ENCODE measurements at regions of chr17 and their contacts with region 1.

Region 1: DNA sequence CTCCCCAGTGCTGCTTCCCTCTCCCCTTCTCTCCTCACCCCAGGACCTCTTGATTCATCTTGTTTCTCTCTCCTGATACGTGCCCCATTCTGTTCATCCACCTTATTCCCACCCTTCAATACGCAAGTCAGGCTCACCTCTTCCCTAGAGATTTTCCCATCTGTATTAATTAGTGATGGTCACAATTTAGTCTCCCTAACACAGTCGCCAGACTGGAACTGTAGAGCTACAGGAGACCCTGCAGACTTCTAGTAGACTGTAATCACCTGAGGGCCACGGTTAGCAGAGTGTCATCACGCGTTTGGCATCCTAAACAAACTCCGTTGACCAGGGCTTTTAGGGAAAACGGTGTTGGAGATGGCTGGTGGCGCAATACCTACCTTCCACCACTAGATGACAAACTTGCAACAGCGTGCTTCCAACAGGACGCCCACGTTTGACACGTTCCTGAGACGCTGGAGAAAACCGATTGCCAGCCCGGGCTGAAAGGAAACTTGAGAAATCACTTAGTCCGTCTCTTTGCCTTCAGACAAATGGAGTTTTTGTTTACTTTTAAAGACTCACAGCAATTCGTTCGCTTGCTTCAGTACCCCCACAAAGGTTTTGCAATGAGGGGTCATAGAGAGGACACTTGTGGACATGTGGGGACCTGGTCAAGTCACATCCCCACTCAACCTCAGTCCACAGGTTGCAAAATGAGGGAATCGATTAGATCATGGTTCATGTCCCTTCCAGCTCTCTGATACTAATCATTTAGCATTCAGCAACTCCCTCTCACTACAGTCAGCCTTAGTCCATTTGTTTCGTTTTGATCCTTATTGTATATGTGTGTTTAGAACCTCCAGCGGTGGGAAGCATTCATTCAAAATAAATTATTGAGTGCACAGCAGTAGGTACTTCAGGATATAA is 20.6 kb downstream of the MYL4 start:
- DNase-seq: peak; percentile 86 to 92 (median 87)
- ATAC-seq: peak; percentile 47 to 60
- H3K4me3 ChIP-seq: no peak overlapping the region
- H3K27ac ChIP-seq: peak overlapping the region; percentile 52
- H3K4me1 ChIP-seq: peaks cover 6% of the 10 kb centered on the region
- H3K27me3 ChIP-seq: no peaks in the 10 kb centered on the region

Region 2: DNA sequence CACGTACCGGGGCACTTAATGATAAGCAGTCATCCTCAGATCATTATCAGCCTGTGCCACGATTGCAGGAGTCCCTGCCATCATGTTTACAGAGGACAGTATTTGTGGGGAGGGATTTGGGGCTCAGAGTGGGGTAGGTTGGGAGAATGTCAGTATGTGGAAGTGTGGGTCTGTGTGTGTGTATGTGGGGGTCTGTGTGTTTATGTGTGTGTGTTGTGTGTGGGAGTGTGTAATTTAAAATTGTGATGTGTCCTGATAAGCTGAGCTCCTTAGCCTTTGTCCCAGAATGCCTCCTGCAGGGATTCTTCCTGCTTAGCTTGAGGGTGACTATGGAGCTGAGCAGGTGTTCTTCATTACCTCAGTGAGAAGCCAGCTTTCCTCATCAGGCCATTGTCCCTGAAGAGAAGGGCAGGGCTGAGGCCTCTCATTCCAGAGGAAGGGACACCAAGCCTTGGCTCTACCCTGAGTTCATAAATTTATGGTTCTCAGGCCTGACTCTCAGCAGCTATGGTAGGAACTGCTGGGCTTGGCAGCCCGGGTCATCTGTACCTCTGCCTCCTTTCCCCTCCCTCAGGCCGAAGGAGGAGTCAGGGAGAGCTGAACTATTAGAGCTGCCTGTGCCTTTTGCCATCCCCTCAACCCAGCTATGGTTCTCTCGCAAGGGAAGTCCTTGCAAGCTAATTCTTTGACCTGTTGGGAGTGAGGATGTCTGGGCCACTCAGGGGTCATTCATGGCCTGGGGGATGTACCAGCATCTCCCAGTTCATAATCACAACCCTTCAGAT is 80.6 kb after region 1 on chr17:
- intact Hi-C with region 1: loop called (anchors 5 kb)
- DNase-seq: no peak
- ATAC-seq: no peak
- H3K4me3 ChIP-seq: no peak overlapping the region
- H3K27ac ChIP-seq: no peak overlapping the region
- H3K4me1 ChIP-seq: peaks cover 1% of the 10 kb centered on the region
- H3K27me3 ChIP-seq: no peaks in the 10 kb centered on the region

Region 3: DNA sequence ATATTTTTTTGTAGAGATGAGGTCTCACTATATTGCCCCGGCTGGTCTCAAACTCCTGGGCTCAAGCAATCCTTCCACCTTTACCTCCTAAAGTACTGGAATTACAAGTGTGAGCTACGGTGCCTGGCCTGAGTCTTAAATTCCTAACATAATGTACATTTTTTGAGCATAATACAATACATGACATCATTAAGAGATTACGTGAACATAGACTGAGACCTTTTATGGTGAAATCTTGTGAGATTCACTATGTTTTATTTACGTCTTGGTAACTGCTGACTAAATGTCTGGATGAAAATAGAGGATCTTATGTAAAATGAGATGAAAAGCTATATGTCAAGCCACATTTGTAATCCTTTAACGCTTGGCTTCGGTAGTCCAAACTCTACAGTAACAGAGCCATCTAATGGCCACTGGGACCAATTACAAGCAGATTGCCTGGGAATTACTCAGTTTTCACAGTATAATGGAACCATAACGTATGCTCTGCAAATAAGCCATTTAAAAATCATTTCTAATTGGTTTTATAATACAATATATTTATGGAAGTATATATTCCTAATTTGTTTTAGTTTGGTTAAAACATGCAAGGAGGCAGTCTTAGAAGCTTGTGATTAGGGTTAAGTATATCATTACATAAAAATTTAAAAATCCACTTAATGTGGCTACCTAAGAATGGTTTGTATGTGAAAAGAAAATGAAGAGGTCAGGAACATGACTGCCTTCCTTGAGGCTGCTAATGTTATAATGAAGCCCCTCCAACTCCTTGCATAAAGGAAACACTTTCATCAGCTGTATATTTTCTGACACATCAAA is 85.9 kb after region 1 on chr17:
- intact Hi-C with region 1: loop called (anchors 5 kb)
- DNase-seq: no peak
- ATAC-seq: peak; percentile 75 to 78
- H3K4me3 ChIP-seq: no peak overlapping the region
- H3K27ac ChIP-seq: no peak overlapping the region
- H3K4me1 ChIP-seq: peaks cover 1% of the 10 kb centered on the region
- H3K27me3 ChIP-seq: no peaks in the 10 kb centered on the region

Measured in right cardiac atrium (tissue), 5 donors.